ENCODE measurements at regions of chr1 and their contacts with region 1.

Region 1: GRCh38 chr1:54375712-54376429 is 30.3 kb downstream of the SSBP3 start:
- DNase-seq: no peak
- ATAC-seq: peak; percentile 38

Region 2: DNA sequence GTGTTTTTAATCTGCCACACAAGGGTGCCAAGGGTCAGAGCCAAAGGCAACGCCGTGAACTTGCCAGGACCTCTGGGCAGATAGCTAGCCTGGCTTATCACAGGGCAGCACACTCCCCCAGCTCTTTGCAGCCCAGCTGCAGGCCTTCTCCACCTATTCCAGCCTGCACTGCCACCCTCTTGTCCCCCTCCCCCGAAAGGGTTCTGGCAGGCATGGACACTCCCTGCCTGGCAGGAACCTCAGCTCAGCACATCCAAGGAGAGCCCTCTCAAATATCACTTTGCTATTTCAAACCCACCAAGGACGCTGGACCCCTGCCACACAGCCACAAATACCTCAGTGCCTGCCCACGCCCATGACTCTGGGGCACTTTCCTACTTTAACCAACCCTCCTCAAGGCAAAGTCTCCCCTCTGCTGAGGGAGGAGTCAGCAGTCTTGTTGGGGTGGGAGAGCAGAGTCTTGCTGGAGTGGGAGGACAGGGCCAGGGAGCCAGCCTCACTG is 21.3 kb after region 1 on chr1:
- intact Hi-C with region 1: loop called (anchors 2 kb)
- DNase-seq: peak; percentile 81
- ATAC-seq: peak; percentile 96

Measured in Right ventricle myocardium inferior (tissue), 1 donor.